HCT116 (cell line): ENCODE measurements at regions of chr22 and their contacts with region 1.

Region 1: GRCh38 chr22:37745548-37746365 is 48.9 kb downstream of the TRIOBP start:
- DNase-seq: no peak
- ATAC-seq: peak; percentile 47
- H3K4me3 ChIP-seq: peak overlapping the region; percentile 94 to 98
- H3K27ac ChIP-seq: peak overlapping the region; percentile 98
- H3K4me1 ChIP-seq: peaks cover 71 to 85% of the 10 kb centered on the region in 2 experiments
- H3K27me3 ChIP-seq: no peaks in the 10 kb centered on the region
- CTCF ChIP-seq: no peak
- POLR2A ChIP-seq: no peak
- RAD21 ChIP-seq: no peak

Region 2: DNA sequence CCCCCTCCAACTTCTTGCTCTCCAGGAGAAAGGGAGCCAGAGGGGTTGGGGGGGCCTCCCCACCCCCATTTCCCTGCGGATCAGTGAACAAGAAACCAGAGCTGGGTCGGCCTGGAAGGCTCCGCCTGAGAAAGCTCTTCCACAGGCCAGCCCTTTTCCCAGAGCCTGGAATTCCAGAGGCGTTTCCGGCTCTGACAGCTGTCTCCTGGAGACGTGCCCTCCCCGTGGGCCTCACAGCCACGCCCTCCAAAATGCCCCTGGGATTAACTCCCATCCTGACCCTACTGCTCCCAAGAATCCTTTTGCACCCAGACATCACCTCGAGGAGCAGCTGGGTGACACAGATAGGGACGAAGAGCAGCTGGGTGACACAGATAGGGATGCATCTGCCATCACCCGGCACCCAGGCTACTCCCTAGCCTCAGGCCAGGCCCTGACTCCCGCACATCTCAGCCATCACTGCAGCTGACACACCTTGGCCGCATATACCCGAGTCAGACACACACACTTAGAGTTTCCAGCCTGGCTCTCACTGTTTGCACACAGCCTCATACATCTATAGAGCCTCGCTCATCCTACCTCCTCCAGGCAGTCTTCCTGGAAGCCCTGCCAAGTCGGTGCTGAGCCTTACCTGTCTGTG is 193.1 kb before region 1 on chr22:
- CTCF ChIA-PET with region 1: no interaction called
- POLR2A ChIA-PET with region 1: no interaction called
- RAD21 ChIA-PET with region 1: no interaction called
- intact Hi-C with region 1: no loop called
- DNase-seq: no peak
- ATAC-seq: peak; percentile 31; the same call in 1 of the 2 replicates
- H3K4me3 ChIP-seq: no peak overlapping the region
- H3K27ac ChIP-seq: no peak overlapping the region
- H3K4me1 ChIP-seq: peaks cover 4 to 33% of the 10 kb centered on the region in 2 experiments; a peak in 3 of 4 replicates
- H3K27me3 ChIP-seq: no peaks in the 10 kb centered on the region
- CTCF ChIP-seq: no peak
- POLR2A ChIP-seq: no peak
- RAD21 ChIP-seq: no peak

Region 3: GRCh38 chr22:37633625-37634416 is 111.9 kb before region 1 on chr22:
- CTCF ChIA-PET with region 1: no interaction called
- POLR2A ChIA-PET with region 1: no interaction called
- RAD21 ChIA-PET with region 1: no interaction called
- intact Hi-C with region 1: no loop called
- DNase-seq: no peak
- ATAC-seq: no peak
- H3K4me3 ChIP-seq: no peak overlapping the region
- H3K27ac ChIP-seq: no peak overlapping the region
- H3K4me1 ChIP-seq: peaks cover 19 to 38% of the 10 kb centered on the region in 2 experiments; a peak in 3 of 4 replicates
- H3K27me3 ChIP-seq: no peaks in the 10 kb centered on the region
- CTCF ChIP-seq: no peak
- POLR2A ChIP-seq: no peak
- RAD21 ChIP-seq: no peak

Region 4: DNA sequence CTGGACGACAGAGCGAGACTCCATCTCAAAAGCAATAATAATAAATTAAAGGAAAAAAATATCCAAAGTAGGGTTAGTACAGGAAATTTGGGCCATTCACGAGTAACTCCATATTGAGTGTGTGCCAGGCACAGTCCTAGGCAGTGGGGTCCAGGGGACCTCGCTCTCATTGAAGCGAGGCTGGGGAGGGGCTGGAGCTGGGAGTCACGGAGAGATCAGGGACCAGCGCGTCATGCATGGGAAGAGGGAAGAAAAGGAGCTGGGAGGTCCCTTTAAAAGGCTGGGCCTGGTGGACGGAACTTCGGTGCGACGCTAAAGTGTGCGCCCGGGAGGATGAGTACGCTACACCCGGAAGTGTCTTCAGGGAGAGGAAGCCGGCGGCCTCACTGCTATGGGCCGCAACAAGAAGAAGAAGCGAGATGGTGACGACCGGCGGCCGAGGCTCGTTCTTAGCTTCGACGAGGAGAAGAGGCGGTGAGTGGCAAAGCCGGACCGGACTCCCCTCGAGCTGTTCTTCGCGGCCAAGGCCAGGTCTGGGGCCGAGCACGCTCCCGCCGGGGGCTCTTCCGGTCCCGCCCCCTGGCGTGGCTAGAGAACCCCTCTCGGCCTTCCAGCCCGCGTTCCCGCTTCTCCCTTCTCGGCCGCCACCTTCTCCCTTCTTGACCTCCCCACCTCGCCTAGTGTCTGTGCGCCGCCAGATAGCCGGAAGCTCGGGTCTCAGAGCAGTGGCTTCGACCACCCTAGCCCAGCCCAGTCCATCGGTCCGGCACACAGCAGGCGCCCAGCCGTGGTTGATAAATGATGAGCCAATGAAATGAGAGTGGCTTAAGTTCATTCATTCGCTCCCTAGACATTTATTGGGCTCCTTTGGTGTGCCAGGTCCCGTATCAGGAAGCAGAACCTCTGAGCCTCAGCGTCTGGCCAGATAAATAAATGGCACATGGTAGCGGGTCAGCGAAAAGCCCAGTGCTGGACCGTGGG is 59.5 kb before region 1 on chr22 and contains the start of gene NOL12:
- CTCF ChIA-PET with region 1: no interaction called
- POLR2A ChIA-PET with region 1: interaction called, 4 read pairs
- RAD21 ChIA-PET with region 1: no interaction called
- intact Hi-C with region 1: loop called (anchors 5 kb)
- DNase-seq: peak; percentile 86
- ATAC-seq: peak; percentile 77
- H3K4me3 ChIP-seq: peak within 1 kb of the TSS; percentile 82 to 100
- H3K27ac ChIP-seq: peak within 1 kb of the TSS; percentile 87
- H3K4me1 ChIP-seq: peaks cover 30 to 63% of the 10 kb centered on the region in 2 experiments
- H3K27me3 ChIP-seq: no peaks in the 10 kb centered on the region
- CTCF ChIP-seq: no peak
- POLR2A ChIP-seq: peak; percentile 44
- RAD21 ChIP-seq: no peak
- total RNA-seq, gene NOL12: 31.4 TPM

Region 5: GRCh38 chr22:37696657-37697537 is 48.9 kb before region 1 on chr22 and contains the start of gene TRIOBP:
- CTCF ChIA-PET with region 1: no interaction called
- POLR2A ChIA-PET with region 1: no interaction called
- RAD21 ChIA-PET with region 1: no interaction called
- intact Hi-C with region 1: loop called (anchors 5 kb)
- DNase-seq: peak; percentile 85
- ATAC-seq: peak; percentile 100
- H3K4me3 ChIP-seq: peak within 1 kb of the TSS; percentile 25 to 32; a peak in 3 of 4 replicates
- H3K27ac ChIP-seq: peak within 1 kb of the TSS; percentile 36; the same call in 1 of the 2 replicates
- H3K4me1 ChIP-seq: peaks cover 9 to 24% of the 10 kb centered on the region in 2 experiments; a peak in 3 of 4 replicates
- H3K27me3 ChIP-seq: no peaks in the 10 kb centered on the region
- CTCF ChIP-seq: peak; percentile 3 to 63 (median 47); a peak in 4 of 6 replicates
- POLR2A ChIP-seq: no peak
- RAD21 ChIP-seq: peak; percentile 37; the same call in 1 of the 2 replicates
- total RNA-seq, gene TRIOBP: 244 TPM

Region 6: DNA sequence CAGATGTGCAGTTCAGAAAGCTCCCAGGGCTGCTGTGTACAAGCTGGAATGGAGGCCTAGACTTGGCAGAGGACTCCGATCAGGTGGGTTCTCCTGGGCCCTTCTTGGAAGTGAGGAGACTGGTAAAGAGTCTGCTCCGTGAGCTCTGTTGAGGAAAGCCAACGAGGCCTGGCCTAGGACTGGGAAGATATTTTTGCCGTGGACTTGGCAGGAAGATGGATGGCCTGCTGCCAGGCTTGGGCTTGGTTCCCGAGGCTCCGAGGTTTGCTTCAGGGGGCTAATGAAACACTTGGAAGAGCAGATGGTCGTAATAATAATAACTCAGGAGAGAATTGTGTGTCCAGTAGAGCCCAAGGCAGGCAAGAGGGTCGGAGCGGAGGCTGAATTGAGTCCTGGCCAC is 81.3 kb after region 1 on chr22:
- CTCF ChIA-PET with region 1: no interaction called
- POLR2A ChIA-PET with region 1: no interaction called
- RAD21 ChIA-PET with region 1: no interaction called
- intact Hi-C with region 1: no loop called
- DNase-seq: no peak
- ATAC-seq: no peak
- H3K4me3 ChIP-seq: no peak overlapping the region
- H3K27ac ChIP-seq: no peak overlapping the region
- H3K4me1 ChIP-seq: peaks cover 0 to 7% of the 10 kb centered on the region in 2 experiments; a peak in 1 of 4 replicates
- H3K27me3 ChIP-seq: no peaks in the 10 kb centered on the region
- CTCF ChIP-seq: no peak
- POLR2A ChIP-seq: no peak
- RAD21 ChIP-seq: no peak